Transverse colon (tissue), 4 donors: ENCODE measurements at regions of chr7 and their contacts with region 1.

Region 1: GRCh38 chr7:105703207-105703930 is 122.1 kb upstream of the EFCAB10 start:
- DNase-seq: no peak
- H3K4me3 ChIP-seq: no peak overlapping the region
- H3K27ac ChIP-seq: no peak overlapping the region
- H3K4me1 ChIP-seq: peaks cover 0 to 12% (median 0%) of the 10 kb centered on the region in 4 donors
- H3K27me3 ChIP-seq: no peaks in the 10 kb centered on the region
- CTCF ChIP-seq: no peak
- EP300 ChIP-seq: no peak
- POLR2A ChIP-seq: no peak

Region 2: DNA sequence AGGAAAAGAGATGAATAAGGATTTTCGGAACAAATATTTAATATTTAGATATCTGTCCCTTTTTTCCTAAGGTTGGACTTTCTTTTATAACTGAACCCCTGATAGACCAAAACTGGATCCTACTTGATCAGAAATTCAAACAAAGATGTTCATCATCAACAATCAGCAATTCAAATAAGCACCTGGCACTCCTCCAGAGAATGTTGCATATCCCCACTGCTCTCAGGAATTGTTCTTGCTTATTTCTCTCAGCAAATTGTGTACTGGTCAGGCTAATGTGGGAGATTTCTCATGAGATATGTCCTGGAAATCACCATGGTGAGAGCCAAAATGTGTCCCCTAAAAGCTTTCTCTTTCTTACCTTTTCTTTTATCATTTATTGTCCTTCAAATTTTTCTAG is 1415.2 kb before region 1 on chr7:
- in situ Hi-C with region 1: no loop called
- intact Hi-C with region 1: no loop called
- DNase-seq: no peak
- H3K4me3 ChIP-seq: no peak overlapping the region
- H3K27ac ChIP-seq: no peak overlapping the region
- H3K4me1 ChIP-seq: no peaks in the 10 kb centered on the region
- H3K27me3 ChIP-seq: no peaks in the 10 kb centered on the region
- CTCF ChIP-seq: no peak
- EP300 ChIP-seq: no peak
- POLR2A ChIP-seq: no peak

Region 3: DNA sequence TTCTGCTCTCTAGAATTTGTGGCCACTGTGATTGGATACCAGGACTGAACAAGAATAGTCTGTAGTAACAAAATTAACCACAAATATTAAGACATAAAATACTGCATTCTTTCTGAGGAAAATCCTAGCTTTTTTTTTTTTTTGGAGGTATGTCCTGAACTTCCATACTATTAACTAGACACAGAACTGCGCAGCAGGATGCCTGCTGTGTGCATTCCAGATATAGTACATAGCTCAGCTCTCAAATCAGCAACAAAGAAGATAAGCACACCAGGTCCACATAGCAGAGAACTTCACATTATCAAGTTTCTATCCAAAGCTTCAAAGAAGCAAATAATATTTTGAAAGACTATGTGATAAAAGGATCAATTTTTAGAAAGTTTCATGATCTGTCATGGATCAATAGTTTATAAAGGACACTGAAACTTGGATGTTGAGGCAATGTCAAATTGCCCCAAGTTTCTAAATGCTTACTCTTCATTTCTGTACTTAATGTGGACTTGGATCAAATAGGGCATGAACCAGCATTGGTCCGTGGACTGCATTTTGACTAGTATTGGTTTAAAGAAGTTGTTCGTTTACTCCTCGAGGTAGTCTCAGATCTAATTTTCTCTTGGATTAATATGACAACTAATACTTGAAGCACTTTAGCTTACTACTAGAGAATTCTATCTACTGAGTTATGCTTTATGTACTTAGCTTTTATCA is 566.0 kb after region 1 on chr7:
- in situ Hi-C with region 1: no loop called
- intact Hi-C with region 1: loop called (anchors 5 kb)
- DNase-seq: no peak
- H3K4me3 ChIP-seq: no peak overlapping the region
- H3K27ac ChIP-seq: no peak overlapping the region
- H3K4me1 ChIP-seq: no peaks in the 10 kb centered on the region
- H3K27me3 ChIP-seq: no peaks in the 10 kb centered on the region
- CTCF ChIP-seq: no peak
- EP300 ChIP-seq: no peak
- POLR2A ChIP-seq: no peak